Activated CD4-positive, alpha-beta memory T cell treated with anti-CD3 and anti-CD28 coated beads for 36 hours (primary cell): ENCODE measurements at regions of chr11 and their contacts with region 1.

Region 1: GRCh38 chr11:62880803-62881578 is at the start of gene SLC3A2:
- DNase-seq: peak; percentile 92
- H3K4me3 Mint-ChIP-seq: peak within 1 kb of the TSS; percentile 99
- H3K27ac Mint-ChIP-seq: peak within 1 kb of the TSS; percentile 100
- H3K4me1 Mint-ChIP-seq: peaks cover 46% of the 10 kb centered on the region
- H3K27me3 Mint-ChIP-seq: no peaks in the 10 kb centered on the region
- total RNA-seq, gene SLC3A2: 309 to 314 TPM

Region 2: DNA sequence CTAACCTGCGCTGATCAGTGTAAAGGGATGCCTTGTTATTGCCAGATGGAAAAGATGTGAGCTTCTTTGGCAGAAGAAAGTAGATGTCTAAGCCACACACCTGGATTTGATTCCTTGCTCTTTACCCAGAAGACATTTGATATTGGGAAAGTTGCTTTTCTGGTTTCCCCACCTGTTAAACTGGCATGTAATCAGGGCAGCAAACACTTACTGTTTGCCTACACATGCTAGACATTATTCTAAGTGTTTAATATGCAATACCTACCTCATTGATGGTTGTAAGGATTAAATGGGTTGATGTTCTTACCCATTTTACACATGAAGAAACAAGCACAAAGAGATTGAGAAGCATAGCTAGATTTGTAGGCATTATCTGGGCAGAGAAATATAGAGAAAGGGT is 527.1 kb before region 1 on chr11:
- CTCF ChIA-PET with region 1: no interaction called
- POLR2A ChIA-PET with region 1: no interaction called
- intact Hi-C with region 1: no loop called
- DNase-seq: no peak
- H3K4me3 Mint-ChIP-seq: no peak overlapping the region
- H3K27ac Mint-ChIP-seq: no peak overlapping the region
- H3K4me1 Mint-ChIP-seq: peaks cover 10% of the 10 kb centered on the region
- H3K27me3 Mint-ChIP-seq: no peaks in the 10 kb centered on the region

Region 3: GRCh38 chr11:62705880-62706849 is 174.8 kb before region 1 on chr11:
- CTCF ChIA-PET with region 1: no interaction called
- POLR2A ChIA-PET with region 1: no interaction called
- intact Hi-C with region 1: loop called (anchors 1 kb)
- DNase-seq: peak; percentile 96
- H3K4me3 Mint-ChIP-seq: peak overlapping the region; percentile 85
- H3K27ac Mint-ChIP-seq: peak overlapping the region; percentile 70
- H3K4me1 Mint-ChIP-seq: peaks cover 50% of the 10 kb centered on the region
- H3K27me3 Mint-ChIP-seq: no peaks in the 10 kb centered on the region

Region 4: GRCh38 chr11:62753736-62754603 is 127.0 kb before region 1 on chr11 and contains the start of gene ZBTB3:
- CTCF ChIA-PET with region 1: interaction called, 5 read pairs
- POLR2A ChIA-PET with region 1: interaction called, 10 read pairs
- intact Hi-C with region 1: no loop called
- DNase-seq: peak; percentile 98
- H3K4me3 Mint-ChIP-seq: peak within 1 kb of the TSS; percentile 99
- H3K27ac Mint-ChIP-seq: peak within 1 kb of the TSS; percentile 99
- H3K4me1 Mint-ChIP-seq: peaks cover 23% of the 10 kb centered on the region
- H3K27me3 Mint-ChIP-seq: no peaks in the 10 kb centered on the region
- total RNA-seq, gene ZBTB3: 8.4 to 9.7 TPM

Region 5: GRCh38 chr11:62805076-62805892 is 75.7 kb before region 1 on chr11 and contains the start of gene NXF1:
- CTCF ChIA-PET with region 1: no interaction called
- POLR2A ChIA-PET with region 1: interaction called, 12 read pairs
- intact Hi-C with region 1: loop called (anchors 1 kb)
- DNase-seq: peak; percentile 96
- H3K4me3 Mint-ChIP-seq: peak within 1 kb of the TSS; percentile 99
- H3K27ac Mint-ChIP-seq: peak within 1 kb of the TSS; percentile 99
- H3K4me1 Mint-ChIP-seq: peaks cover 34% of the 10 kb centered on the region
- H3K27me3 Mint-ChIP-seq: no peaks in the 10 kb centered on the region
- total RNA-seq, gene NXF1: 70.8 to 83.6 TPM

Region 6: DNA sequence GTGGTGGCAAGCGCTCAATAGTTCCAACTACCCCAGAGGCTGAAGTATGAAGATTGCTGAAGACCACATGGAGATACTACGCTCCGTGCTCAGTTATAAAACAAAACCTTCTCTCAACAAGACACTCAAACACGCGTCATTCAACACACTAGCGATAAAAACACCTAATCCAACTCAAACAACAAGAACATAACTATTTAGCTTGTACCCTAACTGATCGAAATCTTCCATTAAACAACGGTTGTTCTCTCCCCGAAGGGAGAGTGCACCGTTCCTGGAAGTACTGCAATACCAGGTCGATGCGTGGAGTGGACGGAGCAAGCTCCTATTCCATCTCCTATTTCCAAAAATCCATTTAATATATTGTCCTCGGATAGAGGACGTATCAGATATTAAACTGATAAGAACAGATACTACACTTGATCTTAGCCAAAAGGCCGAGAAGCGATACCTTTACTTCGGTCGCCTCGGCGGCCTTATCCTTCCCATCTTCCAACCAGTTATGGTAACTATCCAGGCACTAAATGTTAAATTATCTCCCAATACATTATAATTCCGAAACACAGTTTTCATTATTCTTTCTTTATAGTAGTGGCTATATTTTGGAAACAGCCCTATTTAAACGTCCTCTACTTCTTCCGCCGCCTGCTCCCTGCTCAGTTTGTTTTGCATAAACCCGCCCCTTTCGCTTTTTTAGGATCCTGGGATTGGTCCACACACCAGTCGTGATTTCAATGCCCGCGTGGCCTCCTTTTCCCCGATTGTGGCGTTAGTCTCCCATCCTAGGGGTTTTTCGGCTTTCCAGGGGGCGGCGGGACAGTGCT is 39.4 kb before region 1 on chr11:
- CTCF ChIA-PET with region 1: interaction called, 3 read pairs
- POLR2A ChIA-PET with region 1: interaction called, 86 read pairs
- intact Hi-C with region 1: loop called (anchors 1 kb)
- DNase-seq: peak; percentile 88
- H3K4me3 Mint-ChIP-seq: no peak overlapping the region
- H3K27ac Mint-ChIP-seq: no peak overlapping the region
- H3K4me1 Mint-ChIP-seq: peaks cover 17% of the 10 kb centered on the region
- H3K27me3 Mint-ChIP-seq: no peaks in the 10 kb centered on the region

Region 7: GRCh38 chr11:62905927-62906531 is 25.0 kb after region 1 on chr11:
- CTCF ChIA-PET with region 1: interaction called, 14 read pairs
- POLR2A ChIA-PET with region 1: interaction called, 5 read pairs
- intact Hi-C with region 1: no loop called
- DNase-seq: peak; percentile 87
- H3K4me3 Mint-ChIP-seq: no peak overlapping the region
- H3K27ac Mint-ChIP-seq: no peak overlapping the region
- H3K4me1 Mint-ChIP-seq: peaks cover 24% of the 10 kb centered on the region
- H3K27me3 Mint-ChIP-seq: peaks cover 8% of the 10 kb centered on the region

Region 8: DNA sequence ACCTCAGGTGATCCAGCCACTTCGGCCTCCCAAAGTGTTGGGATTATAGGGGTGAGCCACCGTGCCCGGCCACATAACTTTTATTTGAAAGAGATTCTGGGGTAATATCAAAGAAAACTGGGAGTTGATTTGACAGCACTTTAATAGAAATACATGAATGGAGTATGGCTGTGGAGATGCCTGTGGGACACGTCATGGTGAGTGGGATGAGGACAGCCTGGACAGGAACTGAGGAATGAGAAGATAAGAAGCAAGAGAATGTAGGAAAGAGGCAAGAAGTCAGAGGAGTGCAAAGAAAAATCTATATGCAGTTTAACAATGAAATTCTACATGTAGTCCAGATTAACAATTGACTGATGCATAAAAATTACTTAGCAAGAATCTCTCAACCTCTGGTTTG is 72.8 kb after region 1 on chr11:
- CTCF ChIA-PET with region 1: no interaction called
- POLR2A ChIA-PET with region 1: no interaction called
- intact Hi-C with region 1: no loop called
- DNase-seq: no peak
- H3K4me3 Mint-ChIP-seq: no peak overlapping the region
- H3K27ac Mint-ChIP-seq: no peak overlapping the region
- H3K4me1 Mint-ChIP-seq: no peaks in the 10 kb centered on the region
- H3K27me3 Mint-ChIP-seq: peaks cover 2% of the 10 kb centered on the region